B cell (primary cell): ENCODE measurements at regions of chr12 and their contacts with region 1.

Region 1: GRCh38 chr12:110449799-110450497 is at the start of gene ARPC3:
- DNase-seq: peak; percentile 97
- ATAC-seq: peak; percentile 89
- H3K4me3 ChIP-seq: peak within 1 kb of the TSS; percentile 78 to 96 (median 96)
- H3K4me3 Mint-ChIP-seq: peak within 1 kb of the TSS; percentile 98
- H3K27ac ChIP-seq: peak within 1 kb of the TSS; percentile 96 to 98
- H3K27ac Mint-ChIP-seq: peak within 1 kb of the TSS; percentile 100
- H3K4me1 ChIP-seq: peaks cover 36 to 50% of the 10 kb centered on the region in 2 donors
- H3K4me1 Mint-ChIP-seq: peaks cover 42% of the 10 kb centered on the region
- H3K27me3 ChIP-seq: no peaks in the 10 kb centered on the region
- H3K27me3 Mint-ChIP-seq: no peaks in the 10 kb centered on the region
- CTCF ChIP-seq: peak; percentile 84
- total RNA-seq, gene ARPC3: 360 and 374 TPM in 2 replicates

Region 2: DNA sequence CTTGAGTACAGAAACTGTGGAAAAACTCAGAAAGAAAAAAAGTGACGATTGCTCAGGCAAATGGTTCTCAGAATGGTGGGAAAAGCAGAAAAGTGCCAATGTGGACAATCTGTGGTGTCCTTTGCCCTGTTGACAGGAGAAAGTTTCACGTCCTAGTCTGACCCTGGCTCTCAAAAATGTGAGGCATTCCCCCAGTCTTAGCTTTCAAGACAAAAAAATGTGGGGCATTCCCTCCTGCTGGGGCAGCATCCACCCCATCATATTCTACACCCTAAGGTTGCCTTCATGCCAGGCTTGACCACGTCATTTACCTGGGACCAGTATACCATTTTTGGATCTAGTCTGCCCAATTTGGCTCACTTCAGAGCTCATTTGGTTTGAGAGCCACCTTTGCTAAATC is 25.7 kb before region 1 on chr12:
- CTCF ChIA-PET with region 1: no interaction called
- POLR2A ChIA-PET with region 1: no interaction called
- intact Hi-C with region 1: no loop called
- DNase-seq: no peak
- ATAC-seq: no peak
- H3K4me3 ChIP-seq: no peak overlapping the region
- H3K4me3 Mint-ChIP-seq: no peak overlapping the region
- H3K27ac ChIP-seq: no peak overlapping the region
- H3K27ac Mint-ChIP-seq: no peak overlapping the region
- H3K4me1 ChIP-seq: no peaks in the 10 kb centered on the region
- H3K4me1 Mint-ChIP-seq: no peaks in the 10 kb centered on the region
- H3K27me3 ChIP-seq: no peaks in the 10 kb centered on the region
- H3K27me3 Mint-ChIP-seq: peaks cover 7% of the 10 kb centered on the region
- CTCF ChIP-seq: no peak

Region 3: DNA sequence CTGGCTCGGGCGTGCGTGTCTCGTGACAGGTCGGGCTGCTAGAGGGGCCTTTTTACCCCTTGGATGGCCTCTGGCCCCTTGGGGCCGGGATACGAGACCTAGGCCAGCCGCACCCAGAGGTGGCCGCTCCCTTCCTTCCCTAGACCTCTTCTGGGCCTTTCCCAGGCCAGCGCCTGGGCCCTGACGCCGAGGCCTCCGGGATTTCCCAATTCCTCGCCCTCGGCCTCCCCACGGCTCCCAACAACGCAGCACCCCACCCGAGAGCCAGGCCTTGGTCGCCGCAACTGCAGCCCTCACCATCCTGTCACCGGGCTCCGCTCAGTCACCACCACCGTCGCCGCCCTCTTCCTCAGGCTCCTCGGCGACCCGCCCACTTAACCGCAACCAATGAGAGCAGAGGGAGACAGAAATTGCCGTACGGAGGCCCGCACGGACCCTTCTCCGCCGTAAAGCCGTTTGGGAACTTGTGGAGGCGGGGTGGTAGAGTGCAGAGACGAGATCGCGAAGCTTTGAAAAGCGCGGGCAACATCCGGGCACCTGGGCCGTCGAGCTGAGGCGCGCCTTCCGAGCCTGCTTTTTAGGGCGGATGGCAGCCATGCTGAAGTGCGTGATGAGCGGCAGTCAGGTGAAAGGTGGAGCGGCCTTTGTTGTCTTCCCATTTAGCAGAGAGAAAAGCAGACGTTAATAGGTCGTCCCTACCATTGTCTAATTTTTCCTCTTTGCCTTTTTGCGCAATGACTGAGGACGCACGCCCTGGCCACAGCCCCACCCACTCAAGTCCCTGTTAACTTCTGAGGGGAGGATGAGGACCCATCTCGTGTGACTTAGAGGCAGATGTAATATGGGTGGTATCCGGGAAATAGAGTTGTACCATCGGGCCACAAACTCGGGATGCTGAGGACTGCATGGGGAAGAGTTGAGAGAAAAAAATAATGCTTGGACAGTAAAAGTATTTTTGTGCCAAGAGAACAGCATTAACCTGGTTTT is 52.1 kb after region 1 on chr12 and contains the starts of genes RAD9B and VPS29:
- CTCF ChIA-PET with region 1: interaction called, 25 read pairs
- POLR2A ChIA-PET with region 1: interaction called, 13 read pairs
- intact Hi-C with region 1: loop called (anchors 1 kb)
- DNase-seq: peak; percentile 99
- ATAC-seq: peak; percentile 94
- H3K4me3 ChIP-seq: peak within 1 kb of the TSS; percentile 90 to 99 (median 95)
- H3K4me3 Mint-ChIP-seq: peak within 1 kb of the TSS; percentile 93
- H3K27ac ChIP-seq: peak within 1 kb of the TSS; percentile 85 to 90
- H3K27ac Mint-ChIP-seq: peak within 1 kb of the TSS; percentile 96
- H3K4me1 ChIP-seq: peaks cover 19 to 20% of the 10 kb centered on the region in 2 donors
- H3K4me1 Mint-ChIP-seq: peaks cover 29% of the 10 kb centered on the region
- H3K27me3 ChIP-seq: no peaks in the 10 kb centered on the region
- H3K27me3 Mint-ChIP-seq: no peaks in the 10 kb centered on the region
- CTCF ChIP-seq: no peak
- total RNA-seq, gene RAD9B: 1.5 and 1.7 TPM in 2 replicates
- total RNA-seq, gene VPS29: 117 and 118 TPM in 2 replicates

Region 4: DNA sequence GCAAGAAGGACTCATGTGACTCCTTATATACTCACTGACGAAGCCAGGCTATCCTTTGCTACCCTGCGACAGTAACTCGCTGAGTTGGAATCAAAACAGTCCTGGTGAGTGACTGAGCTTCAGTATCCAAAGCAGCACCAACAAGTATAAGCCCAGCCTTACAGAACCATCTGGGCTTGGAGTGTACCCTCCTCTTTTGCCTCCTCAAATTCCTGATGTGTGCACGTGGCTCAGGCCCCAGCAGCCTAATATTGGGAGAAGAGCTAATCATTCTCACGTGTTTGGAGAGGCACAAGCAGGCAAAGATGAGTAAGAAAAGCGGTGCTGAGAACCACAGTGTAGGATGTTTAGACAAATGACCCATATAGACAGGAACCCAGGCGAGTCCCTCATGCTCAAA is 98.7 kb after region 1 on chr12:
- CTCF ChIA-PET with region 1: interaction called, 21 read pairs
- POLR2A ChIA-PET with region 1: interaction called, 3 read pairs
- intact Hi-C with region 1: loop called (anchors 5 kb)
- DNase-seq: no peak
- ATAC-seq: no peak
- H3K4me3 ChIP-seq: no peak overlapping the region
- H3K4me3 Mint-ChIP-seq: no peak overlapping the region
- H3K27ac ChIP-seq: no peak overlapping the region
- H3K27ac Mint-ChIP-seq: no peak overlapping the region
- H3K4me1 ChIP-seq: peaks cover 3 to 5% of the 10 kb centered on the region in 2 donors
- H3K4me1 Mint-ChIP-seq: peaks cover 26% of the 10 kb centered on the region
- H3K27me3 ChIP-seq: no peaks in the 10 kb centered on the region
- H3K27me3 Mint-ChIP-seq: no peaks in the 10 kb centered on the region
- CTCF ChIP-seq: no peak

Region 5: DNA sequence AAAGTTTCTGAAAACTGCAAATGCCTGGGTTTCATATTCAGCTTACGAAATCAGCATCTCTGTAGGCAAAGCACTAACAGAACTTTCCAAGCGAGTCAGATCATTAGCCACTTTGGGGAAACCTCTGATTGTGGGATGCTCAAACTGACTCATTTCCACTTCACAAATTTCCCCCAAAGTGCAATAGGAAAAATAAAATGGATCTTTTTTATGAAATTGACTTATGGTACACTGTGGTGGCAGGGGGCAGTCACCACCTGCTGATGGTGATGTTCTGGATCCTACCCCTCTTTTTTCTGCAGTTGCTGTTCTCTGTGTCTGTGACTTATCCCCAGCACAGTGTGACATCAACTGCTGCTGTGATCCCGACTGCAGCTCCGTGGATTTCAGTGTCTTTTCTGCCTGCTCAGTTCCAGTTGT is 169.6 kb after region 1 on chr12:
- CTCF ChIA-PET with region 1: interaction called, 10 read pairs
- POLR2A ChIA-PET with region 1: interaction called, 9 read pairs
- intact Hi-C with region 1: no loop called
- DNase-seq: peak; percentile 76
- ATAC-seq: peak; percentile 75
- H3K4me3 ChIP-seq: peak overlapping the region in 4 of 5 experiments; percentile 30 to 55 (median 44)
- H3K4me3 Mint-ChIP-seq: peak overlapping the region; percentile 89
- H3K27ac ChIP-seq: peak overlapping the region; percentile 63 to 76
- H3K27ac Mint-ChIP-seq: peak overlapping the region; percentile 96
- H3K4me1 ChIP-seq: peaks cover 60 to 81% of the 10 kb centered on the region in 2 donors
- H3K4me1 Mint-ChIP-seq: peaks cover 65% of the 10 kb centered on the region
- H3K27me3 ChIP-seq: no peaks in the 10 kb centered on the region
- H3K27me3 Mint-ChIP-seq: no peaks in the 10 kb centered on the region
- CTCF ChIP-seq: peak; percentile 62

Region 6: DNA sequence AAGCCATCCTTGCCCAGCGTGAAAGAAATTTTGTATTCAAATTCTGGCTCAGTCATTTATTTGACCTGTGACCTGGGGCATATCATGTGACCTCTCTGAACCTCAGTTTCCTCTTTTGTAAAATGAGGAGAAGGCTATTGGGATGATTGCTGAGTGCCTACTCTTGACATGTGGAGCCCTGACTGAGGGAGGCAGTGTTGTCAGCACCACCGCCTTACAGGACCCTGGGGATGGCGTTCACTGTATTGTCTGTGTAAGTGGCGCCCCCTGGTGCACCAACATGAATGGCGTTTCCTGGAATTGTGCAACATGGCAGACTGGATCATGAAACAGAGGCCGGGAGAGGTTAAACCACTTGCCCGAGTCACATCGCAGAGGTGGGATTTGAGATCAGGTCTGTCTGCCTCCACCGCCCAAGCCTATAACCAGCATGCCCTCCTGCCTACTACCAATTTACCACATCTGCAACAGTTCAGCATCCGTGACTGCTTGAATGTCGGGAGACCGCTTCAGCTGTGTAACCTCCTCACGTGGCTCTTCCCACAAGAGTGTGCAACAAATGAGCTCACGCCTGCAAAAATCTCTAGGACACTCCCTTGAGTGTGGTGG is 376.7 kb after region 1 on chr12:
- CTCF ChIA-PET with region 1: interaction called, 40 read pairs
- POLR2A ChIA-PET with region 1: interaction called, 4 read pairs
- intact Hi-C with region 1: loop called (anchors 1 kb)
- DNase-seq: peak; percentile 90
- ATAC-seq: peak; percentile 99
- H3K4me3 ChIP-seq: peak overlapping the region in 4 of 5 experiments; percentile 9 to 44 (median 28)
- H3K4me3 Mint-ChIP-seq: peak overlapping the region; percentile 72
- H3K27ac ChIP-seq: no peak overlapping the region
- H3K27ac Mint-ChIP-seq: no peak overlapping the region
- H3K4me1 ChIP-seq: peaks cover 6 to 7% of the 10 kb centered on the region in 2 donors
- H3K4me1 Mint-ChIP-seq: peaks cover 6% of the 10 kb centered on the region
- H3K27me3 ChIP-seq: no peaks in the 10 kb centered on the region
- H3K27me3 Mint-ChIP-seq: peaks cover 10% of the 10 kb centered on the region
- CTCF ChIP-seq: peak; percentile 80